ENCODE measurements at regions of chr9 and their contacts with region 1.

Region 1: DNA sequence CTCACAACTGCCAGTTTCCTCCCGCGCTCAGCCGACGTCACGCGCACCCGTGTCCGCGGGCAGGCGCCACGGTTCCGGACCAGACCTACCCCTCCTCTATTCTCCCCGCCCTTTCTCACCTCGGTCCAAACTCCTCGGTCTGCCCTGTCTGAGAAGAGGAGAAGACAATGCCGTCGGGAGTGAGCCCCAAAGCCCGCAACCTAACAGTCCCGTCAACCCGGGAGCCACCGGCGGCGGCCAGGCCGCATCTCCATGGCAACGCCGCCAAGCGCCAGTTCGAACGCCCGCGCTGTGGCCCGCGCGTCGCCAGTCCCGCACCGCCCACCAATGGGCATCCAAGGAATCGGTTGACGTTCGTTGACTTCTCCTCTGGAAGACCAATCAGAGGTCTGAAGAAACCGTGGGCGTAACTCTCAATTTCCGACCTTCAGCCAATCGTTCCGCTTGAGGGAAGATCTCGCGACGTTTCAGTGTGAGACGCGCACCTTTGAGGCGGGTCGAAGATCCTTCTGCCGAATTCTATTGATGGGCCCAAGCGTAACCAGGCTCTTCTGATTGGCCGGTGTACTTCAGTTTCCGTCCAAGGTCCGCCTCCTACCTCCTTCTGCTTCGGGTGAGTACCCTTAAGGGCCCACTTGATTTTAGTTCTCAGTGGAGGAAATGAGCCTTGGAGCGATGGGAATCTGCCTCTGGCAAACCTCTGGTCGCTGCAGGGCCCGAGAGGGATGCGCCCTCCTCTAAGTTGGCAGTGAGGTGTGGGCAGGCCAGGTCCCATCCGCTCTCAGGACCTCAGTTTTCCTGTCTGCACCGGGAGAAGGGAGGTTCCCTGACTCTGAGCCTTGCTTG is at the starts of genes KIF24 and NUDT2:
- DNase-seq: peak; percentile 99
- ATAC-seq: peak; percentile 91
- H3K4me3 ChIP-seq: peak within 1 kb of the TSS; percentile 90 to 99 (median 97)
- H3K4me3 Mint-ChIP-seq: peak within 1 kb of the TSS; percentile 96
- H3K27ac ChIP-seq: peak within 1 kb of the TSS; percentile 92 to 99
- H3K27ac Mint-ChIP-seq: peak within 1 kb of the TSS; percentile 93
- H3K4me1 ChIP-seq: peaks cover 14 to 25% of the 10 kb centered on the region in 2 donors
- H3K4me1 Mint-ChIP-seq: peaks cover 29% of the 10 kb centered on the region
- H3K27me3 ChIP-seq: no peaks in the 10 kb centered on the region
- H3K27me3 Mint-ChIP-seq: no peaks in the 10 kb centered on the region
- CTCF ChIP-seq: no peak
- total RNA-seq, gene KIF24: 0.79 and 0.87 TPM in 2 replicates
- total RNA-seq, gene NUDT2: 16.1 and 20.4 TPM in 2 replicates

Region 2: DNA sequence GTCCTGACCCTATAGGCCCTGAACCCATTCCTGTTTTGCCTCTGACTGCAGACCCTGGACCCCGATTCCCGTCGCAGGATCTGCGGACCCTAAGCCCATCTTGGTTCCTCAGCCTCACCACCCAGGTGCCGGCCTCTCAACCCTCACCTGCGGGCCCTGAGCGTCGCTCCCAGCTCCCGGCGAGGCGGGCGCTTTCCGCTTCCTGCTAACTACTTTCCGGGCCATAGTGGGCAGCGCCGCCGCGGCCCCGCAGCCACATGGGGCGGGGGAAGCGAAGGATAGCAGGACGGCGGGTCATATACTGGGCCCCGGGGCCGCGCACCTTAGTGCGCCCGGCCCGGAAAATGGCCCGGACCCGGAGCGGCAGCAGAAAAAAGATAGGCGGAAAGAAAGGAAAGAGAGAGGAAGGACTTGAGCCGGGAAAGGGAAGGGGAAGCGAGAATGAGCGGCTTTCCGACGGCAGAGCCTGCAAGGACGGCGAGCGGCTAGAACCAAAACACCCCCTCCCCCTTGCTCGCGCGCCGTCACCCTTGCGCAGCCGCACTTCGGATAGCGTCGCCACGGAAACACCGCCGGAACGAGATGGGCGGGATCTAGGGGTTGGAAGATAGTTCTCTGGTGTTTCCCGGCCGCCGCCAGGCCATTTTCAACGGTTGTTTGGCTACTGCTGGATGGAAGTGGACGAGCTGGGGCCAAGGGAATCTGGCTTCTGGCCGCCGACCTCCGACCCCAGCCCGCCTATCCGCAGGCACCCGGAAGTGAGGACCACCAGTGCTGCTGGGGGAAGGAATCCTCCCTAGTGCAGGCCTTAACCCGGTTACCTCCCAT is 202.8 kb before region 1 on chr9 and contains the start of gene DCAF12:
- CTCF ChIA-PET with region 1: no interaction called
- POLR2A ChIA-PET with region 1: no interaction called
- intact Hi-C with region 1: loop called (anchors 1 kb)
- DNase-seq: peak; percentile 84
- ATAC-seq: peak; percentile 55
- H3K4me3 ChIP-seq: peak within 1 kb of the TSS; percentile 44 to 67 (median 58)
- H3K4me3 Mint-ChIP-seq: peak within 1 kb of the TSS; percentile 93
- H3K27ac ChIP-seq: no peak within 1 kb of the TSS
- H3K27ac Mint-ChIP-seq: peak within 1 kb of the TSS; percentile 60
- H3K4me1 ChIP-seq: peaks cover 51 to 55% of the 10 kb centered on the region in 2 donors
- H3K4me1 Mint-ChIP-seq: peaks cover 48% of the 10 kb centered on the region
- H3K27me3 ChIP-seq: peaks cover 0 to 81% (median 56%) of the 10 kb centered on the region in 4 experiments
- H3K27me3 Mint-ChIP-seq: peaks cover 50% of the 10 kb centered on the region
- CTCF ChIP-seq: no peak
- total RNA-seq, gene DCAF12: 1.9 and 2.3 TPM in 2 replicates

Region 3: DNA sequence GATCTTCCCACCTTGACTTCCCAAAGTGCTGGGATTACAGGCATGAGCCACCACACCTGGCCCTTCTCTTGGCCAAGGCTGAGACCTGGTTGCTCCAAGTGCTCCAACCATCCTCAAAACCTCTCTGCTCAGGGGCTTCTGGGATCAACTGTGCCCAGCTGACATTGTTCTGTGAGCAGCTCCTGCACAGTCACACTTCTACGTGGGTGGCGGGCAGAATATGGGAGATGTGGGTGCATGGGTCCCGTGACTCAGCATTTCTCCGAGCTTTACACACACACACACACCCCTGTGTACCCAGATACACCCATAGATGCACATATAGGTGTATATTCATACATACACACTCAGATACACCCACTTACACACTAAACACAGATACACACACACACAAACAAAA is 58.0 kb after region 1 on chr9:
- CTCF ChIA-PET with region 1: no interaction called
- POLR2A ChIA-PET with region 1: no interaction called
- intact Hi-C with region 1: no loop called
- DNase-seq: no peak
- ATAC-seq: no peak
- H3K4me3 ChIP-seq: no peak overlapping the region
- H3K4me3 Mint-ChIP-seq: no peak overlapping the region
- H3K27ac ChIP-seq: no peak overlapping the region
- H3K27ac Mint-ChIP-seq: no peak overlapping the region
- H3K4me1 ChIP-seq: no peaks in the 10 kb centered on the region
- H3K4me1 Mint-ChIP-seq: peaks cover 4% of the 10 kb centered on the region
- H3K27me3 ChIP-seq: peaks cover 0 to 6% (median 0%) of the 10 kb centered on the region in 4 experiments
- H3K27me3 Mint-ChIP-seq: peaks cover 12% of the 10 kb centered on the region
- CTCF ChIP-seq: no peak

Region 4: GRCh38 chr9:34458013-34458958 is 129.1 kb after region 1 on chr9 and contains the starts of genes DNAI1 and FAM219A:
- CTCF ChIA-PET with region 1: no interaction called
- POLR2A ChIA-PET with region 1: no interaction called
- intact Hi-C with region 1: loop called (anchors 1 kb)
- DNase-seq: peak; percentile 99
- ATAC-seq: peak; percentile 96
- H3K4me3 ChIP-seq: peak within 1 kb of the TSS; percentile 32 to 76 (median 58)
- H3K4me3 Mint-ChIP-seq: peak within 1 kb of the TSS; percentile 96
- H3K27ac ChIP-seq: no peak within 1 kb of the TSS
- H3K27ac Mint-ChIP-seq: peak within 1 kb of the TSS; percentile 86
- H3K4me1 ChIP-seq: peaks cover 14 to 24% of the 10 kb centered on the region in 2 donors
- H3K4me1 Mint-ChIP-seq: peaks cover 35% of the 10 kb centered on the region
- H3K27me3 ChIP-seq: peaks cover 0 to 9% (median 4%) of the 10 kb centered on the region in 4 experiments
- H3K27me3 Mint-ChIP-seq: peaks cover 14% of the 10 kb centered on the region
- CTCF ChIP-seq: no peak
- total RNA-seq, gene DNAI1: not detected in 2 replicates
- total RNA-seq, gene FAM219A: 16.0 and 17.3 TPM in 2 replicates

Region 5: GRCh38 chr9:34522971-34523797 is 194.0 kb after region 1 on chr9 and contains the start of gene ENHO:
- CTCF ChIA-PET with region 1: no interaction called
- POLR2A ChIA-PET with region 1: no interaction called
- intact Hi-C with region 1: loop called (anchors 1 kb)
- DNase-seq: peak; percentile 95
- ATAC-seq: peak; percentile 98
- H3K4me3 ChIP-seq: peak within 1 kb of the TSS in 4 of 5 experiments; percentile 37 to 69 (median 50)
- H3K4me3 Mint-ChIP-seq: peak within 1 kb of the TSS; percentile 89
- H3K27ac ChIP-seq: no peak within 1 kb of the TSS
- H3K27ac Mint-ChIP-seq: peak within 1 kb of the TSS; percentile 76
- H3K4me1 ChIP-seq: peaks cover 9 to 12% of the 10 kb centered on the region in 2 donors
- H3K4me1 Mint-ChIP-seq: peaks cover 13% of the 10 kb centered on the region
- H3K27me3 ChIP-seq: peaks cover 0 to 18% (median 4%) of the 10 kb centered on the region in 4 experiments
- H3K27me3 Mint-ChIP-seq: peaks cover 28% of the 10 kb centered on the region
- CTCF ChIP-seq: no peak
- total RNA-seq, gene ENHO: not detected in 2 replicates

Region 6: DNA sequence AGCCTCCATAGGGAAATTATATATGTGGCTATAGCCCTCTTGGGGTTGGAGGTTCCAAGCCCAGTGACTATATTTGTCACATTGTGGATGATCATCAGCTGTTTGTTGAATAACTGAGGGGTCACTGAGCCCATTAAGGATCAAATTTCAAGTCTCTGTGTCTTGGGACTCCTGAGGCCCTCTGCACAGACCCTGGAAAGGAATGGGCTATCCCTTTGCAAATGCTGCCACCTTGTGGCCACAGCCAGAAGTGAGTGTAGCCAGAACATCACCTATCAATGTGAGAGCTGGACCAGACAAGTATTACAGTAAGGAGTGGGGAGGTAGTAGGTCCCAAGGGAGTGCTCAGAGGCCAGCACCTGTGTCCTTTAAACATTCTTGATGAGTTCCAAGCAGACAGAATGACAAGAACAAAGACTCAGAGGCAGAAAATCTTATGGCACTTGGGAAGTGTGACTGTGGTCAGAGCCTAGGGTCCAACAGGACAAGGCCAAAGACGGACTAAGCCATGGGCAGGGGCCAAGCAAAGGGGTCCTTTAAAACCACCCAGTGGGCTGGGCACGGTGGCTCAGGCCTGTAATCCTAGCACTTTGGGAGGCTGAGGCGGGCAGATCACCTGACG is 274.5 kb after region 1 on chr9:
- CTCF ChIA-PET with region 1: interaction called, 10 read pairs
- POLR2A ChIA-PET with region 1: no interaction called
- intact Hi-C with region 1: no loop called
- DNase-seq: peak; percentile 82
- ATAC-seq: peak; percentile 94
- H3K4me3 ChIP-seq: no peak overlapping the region
- H3K4me3 Mint-ChIP-seq: no peak overlapping the region
- H3K27ac ChIP-seq: no peak overlapping the region
- H3K27ac Mint-ChIP-seq: no peak overlapping the region
- H3K4me1 ChIP-seq: no peaks in the 10 kb centered on the region
- H3K4me1 Mint-ChIP-seq: no peaks in the 10 kb centered on the region
- H3K27me3 ChIP-seq: peaks cover 0 to 10% (median 0%) of the 10 kb centered on the region in 4 experiments
- H3K27me3 Mint-ChIP-seq: peaks cover 13% of the 10 kb centered on the region
- CTCF ChIP-seq: peak; percentile 91

Region 7: GRCh38 chr9:34620061-34620994 is 291.1 kb after region 1 on chr9 and contains the start of gene DCTN3:
- CTCF ChIA-PET with region 1: no interaction called
- POLR2A ChIA-PET with region 1: no interaction called
- intact Hi-C with region 1: loop called (anchors 1 kb)
- DNase-seq: peak; percentile 94
- ATAC-seq: peak; percentile 95
- H3K4me3 ChIP-seq: peak within 1 kb of the TSS; percentile 66 to 96 (median 81)
- H3K4me3 Mint-ChIP-seq: peak within 1 kb of the TSS; percentile 97
- H3K27ac ChIP-seq: peak within 1 kb of the TSS in 1 of 2 donors; percentile 49
- H3K27ac Mint-ChIP-seq: peak within 1 kb of the TSS; percentile 92
- H3K4me1 ChIP-seq: peaks cover 33 to 43% of the 10 kb centered on the region in 2 donors
- H3K4me1 Mint-ChIP-seq: peaks cover 36% of the 10 kb centered on the region
- H3K27me3 ChIP-seq: peaks cover 0 to 45% (median 30%) of the 10 kb centered on the region in 4 experiments
- H3K27me3 Mint-ChIP-seq: peaks cover 32% of the 10 kb centered on the region
- CTCF ChIP-seq: no peak
- total RNA-seq, gene DCTN3: 48.2 and 55.3 TPM in 2 replicates

Measured in B cell (primary cell).